ENCODE measurements at regions of chr20 and their contacts with region 1.

Region 1: GRCh38 chr20:51767010-51767558 is 1.1 kb downstream of the ATP9A start:
- DNase-seq: peak; percentile 97
- ATAC-seq: peak; percentile 95
- H3K4me3 ChIP-seq: peak overlapping the region; percentile 91
- H3K27ac ChIP-seq: peak overlapping the region; percentile 76
- H3K4me1 ChIP-seq: peaks cover 9% of the 10 kb centered on the region
- H3K27me3 ChIP-seq: no peaks in the 10 kb centered on the region
- CTCF ChIP-seq: no peak

Region 2: GRCh38 chr20:51789434-51789833 is 22.4 kb after region 1 on chr20:
- CTCF ChIA-PET with region 1: no interaction called
- POLR2A ChIA-PET with region 1: no interaction called
- intact Hi-C with region 1: no loop called
- DNase-seq: no peak
- ATAC-seq: no peak
- H3K4me3 ChIP-seq: no peak overlapping the region
- H3K27ac ChIP-seq: no peak overlapping the region
- H3K4me1 ChIP-seq: no peaks in the 10 kb centered on the region
- H3K27me3 ChIP-seq: no peaks in the 10 kb centered on the region
- CTCF ChIP-seq: no peak

Region 3: GRCh38 chr20:51884561-51884960 is 117.5 kb after region 1 on chr20:
- CTCF ChIA-PET with region 1: no interaction called
- POLR2A ChIA-PET with region 1: interaction called, 13 read pairs
- intact Hi-C with region 1: no loop called
- DNase-seq: no peak
- ATAC-seq: no peak
- H3K4me3 ChIP-seq: no peak overlapping the region
- H3K27ac ChIP-seq: no peak overlapping the region
- H3K4me1 ChIP-seq: no peaks in the 10 kb centered on the region
- H3K27me3 ChIP-seq: no peaks in the 10 kb centered on the region
- CTCF ChIP-seq: no peak